ENCODE measurements at regions of chr11 and their contacts with region 1.

Region 1: GRCh38 chr11:114262681-114263512 is 33.3 kb upstream of the NNMT start:
- DNase-seq: no peak
- ATAC-seq: no peak
- H3K4me3 Mint-ChIP-seq: no peak overlapping the region
- H3K27ac Mint-ChIP-seq: no peak overlapping the region
- H3K4me1 Mint-ChIP-seq: peaks cover 31% of the 10 kb centered on the region
- H3K27me3 Mint-ChIP-seq: peaks cover 5% of the 10 kb centered on the region
- CTCF ChIP-seq: no peak

Region 2: GRCh38 chr11:113532697-113533424 is 730.0 kb before region 1 on chr11:
- CTCF ChIA-PET with region 1: no interaction called
- POLR2A ChIA-PET with region 1: no interaction called
- intact Hi-C with region 1: loop called (anchors 5 kb)
- DNase-seq: peak; percentile 24
- ATAC-seq: peak; percentile 31
- H3K4me3 Mint-ChIP-seq: no peak overlapping the region
- H3K27ac Mint-ChIP-seq: no peak overlapping the region
- H3K4me1 Mint-ChIP-seq: no peaks in the 10 kb centered on the region
- H3K27me3 Mint-ChIP-seq: peaks cover 10% of the 10 kb centered on the region
- CTCF ChIP-seq: peak; percentile 41

Region 3: DNA sequence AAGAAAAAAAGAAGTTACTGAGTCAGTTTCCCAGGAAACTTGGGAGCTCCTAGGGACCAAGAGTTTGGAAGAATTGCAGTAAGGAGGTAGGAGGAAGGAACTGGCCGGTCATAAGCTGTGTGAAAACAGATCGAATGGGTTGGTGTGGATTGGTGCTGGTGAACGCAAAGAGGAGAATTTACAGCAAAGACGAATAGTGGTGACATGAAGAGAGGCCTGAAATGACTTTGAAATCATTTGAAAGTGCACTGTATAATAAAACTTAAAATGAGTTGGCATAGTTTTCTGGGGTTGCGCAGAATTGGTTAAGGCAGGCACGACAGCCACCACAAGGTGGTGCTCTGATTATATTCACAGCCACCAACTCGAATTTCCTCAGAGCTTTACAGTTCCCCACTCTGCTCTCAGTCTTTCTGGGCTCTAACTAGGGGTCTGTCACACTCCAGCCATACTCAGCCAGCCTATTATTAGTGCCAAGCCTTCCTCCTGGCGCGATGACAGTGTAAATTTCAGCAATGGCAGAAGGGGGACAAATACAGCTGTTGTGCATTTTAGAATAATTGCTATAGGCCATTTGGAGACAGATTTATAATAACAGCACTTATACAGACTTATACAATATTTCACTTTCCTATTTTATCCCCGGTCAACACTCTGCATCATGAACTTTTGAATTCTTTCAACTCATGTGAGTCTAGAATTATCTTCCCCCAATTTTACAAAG is 366.6 kb before region 1 on chr11:
- CTCF ChIA-PET with region 1: interaction called, 306 read pairs
- POLR2A ChIA-PET with region 1: interaction called, 4 read pairs
- intact Hi-C with region 1: loop called (anchors 1 kb)
- DNase-seq: no peak
- ATAC-seq: peak; percentile 73
- H3K4me3 Mint-ChIP-seq: no peak overlapping the region
- H3K27ac Mint-ChIP-seq: peak overlapping the region; percentile 37
- H3K4me1 Mint-ChIP-seq: peaks cover 21% of the 10 kb centered on the region
- H3K27me3 Mint-ChIP-seq: no peaks in the 10 kb centered on the region
- CTCF ChIP-seq: peak; percentile 67

Region 4: GRCh38 chr11:113994077-113994954 is 268.6 kb before region 1 on chr11:
- CTCF ChIA-PET with region 1: interaction called, 279 read pairs
- POLR2A ChIA-PET with region 1: interaction called, 7 read pairs
- intact Hi-C with region 1: loop called (anchors 1 kb)
- DNase-seq: no peak
- ATAC-seq: peak; percentile 74
- H3K4me3 Mint-ChIP-seq: no peak overlapping the region
- H3K27ac Mint-ChIP-seq: no peak overlapping the region
- H3K4me1 Mint-ChIP-seq: peaks cover 12% of the 10 kb centered on the region
- H3K27me3 Mint-ChIP-seq: peaks cover 4% of the 10 kb centered on the region
- CTCF ChIP-seq: no peak

Region 5: GRCh38 chr11:114059278-114059983 is 203.5 kb before region 1 on chr11 and contains the start of gene ZBTB16:
- CTCF ChIA-PET with region 1: interaction called, 18 read pairs
- POLR2A ChIA-PET with region 1: interaction called, 7 read pairs
- intact Hi-C with region 1: loop called (anchors 2 kb)
- DNase-seq: no peak
- ATAC-seq: peak; percentile 40
- H3K4me3 Mint-ChIP-seq: peak within 1 kb of the TSS; percentile 87
- H3K27ac Mint-ChIP-seq: no peak within 1 kb of the TSS
- H3K4me1 Mint-ChIP-seq: peaks cover 16% of the 10 kb centered on the region
- H3K27me3 Mint-ChIP-seq: peaks cover 41% of the 10 kb centered on the region
- CTCF ChIP-seq: no peak
- total RNA-seq, gene ZBTB16: 1.3 and 2.5 TPM in 2 replicates

Region 6: DNA sequence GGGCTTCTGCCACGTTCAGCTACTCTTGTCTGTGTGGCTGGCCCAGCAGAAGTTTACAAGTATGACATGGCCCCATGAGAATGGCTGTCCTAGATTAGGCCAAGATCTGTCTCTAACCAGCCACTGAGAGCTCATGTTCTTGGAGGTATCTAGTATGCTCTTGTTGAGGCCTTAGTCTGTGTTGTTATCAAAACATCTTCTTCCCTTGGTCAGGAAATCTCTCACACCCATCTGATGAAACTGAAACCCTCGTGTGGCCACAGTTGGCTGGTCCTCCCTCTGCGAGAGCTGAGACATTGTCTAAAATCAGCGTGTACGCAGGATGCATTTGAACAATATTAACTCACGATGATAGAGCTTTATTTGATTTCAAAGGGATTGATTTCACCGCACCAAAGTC is 75.7 kb before region 1 on chr11:
- CTCF ChIA-PET with region 1: interaction called, 21 read pairs
- POLR2A ChIA-PET with region 1: interaction called, 15 read pairs
- intact Hi-C with region 1: loop called (anchors 1 kb)
- DNase-seq: no peak
- ATAC-seq: peak; percentile 82
- H3K4me3 Mint-ChIP-seq: peak overlapping the region; percentile 55
- H3K27ac Mint-ChIP-seq: peak overlapping the region; percentile 94
- H3K4me1 Mint-ChIP-seq: peaks cover 69% of the 10 kb centered on the region
- H3K27me3 Mint-ChIP-seq: no peaks in the 10 kb centered on the region
- CTCF ChIP-seq: no peak

Region 7: GRCh38 chr11:114938799-114939198 is 675.9 kb after region 1 on chr11:
- CTCF ChIA-PET with region 1: no interaction called
- POLR2A ChIA-PET with region 1: no interaction called
- intact Hi-C with region 1: no loop called
- DNase-seq: no peak
- ATAC-seq: no peak
- H3K4me3 Mint-ChIP-seq: no peak overlapping the region
- H3K27ac Mint-ChIP-seq: no peak overlapping the region
- H3K4me1 Mint-ChIP-seq: no peaks in the 10 kb centered on the region
- H3K27me3 Mint-ChIP-seq: no peaks in the 10 kb centered on the region
- CTCF ChIP-seq: no peak

Measured in activated B cell treated with CpG ODN at 0.5 μM for 24 hours (primary cell).